Activated CD4-positive, alpha-beta memory T cell treated with anti-CD3 and anti-CD28 coated beads for 36 hours (primary cell): ENCODE measurements at regions of chr2 and their contacts with region 1.

Region 1: GRCh38 chr2:160109936-160110673 is 47.7 kb upstream of the PLA2R1 start:
- DNase-seq: peak; percentile 65
- H3K4me3 Mint-ChIP-seq: no peak overlapping the region
- H3K27ac Mint-ChIP-seq: no peak overlapping the region
- H3K4me1 Mint-ChIP-seq: no peaks in the 10 kb centered on the region
- H3K27me3 Mint-ChIP-seq: peaks cover 21% of the 10 kb centered on the region

Region 2: GRCh38 chr2:160087854-160088745 is 22.0 kb before region 1 on chr2:
- CTCF ChIA-PET with region 1: interaction called, 10 read pairs
- POLR2A ChIA-PET with region 1: no interaction called
- intact Hi-C with region 1: no loop called
- DNase-seq: no peak
- H3K4me3 Mint-ChIP-seq: no peak overlapping the region
- H3K27ac Mint-ChIP-seq: no peak overlapping the region
- H3K4me1 Mint-ChIP-seq: no peaks in the 10 kb centered on the region
- H3K27me3 Mint-ChIP-seq: peaks cover 1% of the 10 kb centered on the region

Region 3: GRCh38 chr2:160096409-160096808 is 13.7 kb before region 1 on chr2:
- CTCF ChIA-PET with region 1: interaction called, 12 read pairs
- POLR2A ChIA-PET with region 1: no interaction called
- intact Hi-C with region 1: no loop called
- DNase-seq: peak; percentile 26
- H3K4me3 Mint-ChIP-seq: no peak overlapping the region
- H3K27ac Mint-ChIP-seq: no peak overlapping the region
- H3K4me1 Mint-ChIP-seq: peaks cover 5% of the 10 kb centered on the region
- H3K27me3 Mint-ChIP-seq: peaks cover 9% of the 10 kb centered on the region

Region 4: DNA sequence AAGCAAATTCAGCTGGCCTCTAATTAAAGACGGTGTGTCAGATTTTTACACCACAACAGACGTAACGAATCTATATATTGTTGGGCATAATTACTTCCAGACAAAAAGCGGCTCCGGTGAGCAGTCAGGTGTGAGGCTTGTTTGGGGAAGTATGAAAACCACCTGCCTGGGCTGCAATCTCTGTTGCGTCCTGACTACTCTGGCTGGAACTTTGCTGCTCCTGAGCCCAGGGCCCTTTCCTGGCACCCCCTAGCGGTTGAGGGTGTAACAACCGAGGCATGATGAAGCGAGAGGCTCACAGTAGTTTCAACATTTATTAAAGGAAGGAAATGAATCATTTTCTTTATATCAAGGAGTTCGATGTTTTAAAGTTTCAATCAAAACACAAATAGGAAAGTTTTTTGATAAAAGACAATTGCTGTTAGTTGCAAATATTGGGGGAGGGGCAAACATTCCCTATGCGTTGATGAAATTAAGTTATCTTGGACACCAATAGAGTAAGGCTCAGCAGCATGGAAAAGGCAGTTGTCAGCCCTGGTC is 100.6 kb after region 1 on chr2:
- CTCF ChIA-PET with region 1: interaction called, 24 read pairs
- POLR2A ChIA-PET with region 1: interaction called, 5 read pairs
- intact Hi-C with region 1: loop called (anchors 1 kb)
- DNase-seq: peak; percentile 82
- H3K4me3 Mint-ChIP-seq: no peak overlapping the region
- H3K27ac Mint-ChIP-seq: no peak overlapping the region
- H3K4me1 Mint-ChIP-seq: peaks cover 32% of the 10 kb centered on the region
- H3K27me3 Mint-ChIP-seq: peaks cover 5% of the 10 kb centered on the region

Region 5: GRCh38 chr2:160252278-160252887 is 142.3 kb after region 1 on chr2:
- CTCF ChIA-PET with region 1: interaction called, 20 read pairs
- POLR2A ChIA-PET with region 1: no interaction called
- intact Hi-C with region 1: no loop called
- DNase-seq: no peak
- H3K4me3 Mint-ChIP-seq: no peak overlapping the region
- H3K27ac Mint-ChIP-seq: no peak overlapping the region
- H3K4me1 Mint-ChIP-seq: no peaks in the 10 kb centered on the region
- H3K27me3 Mint-ChIP-seq: peaks cover 1% of the 10 kb centered on the region

Region 6: GRCh38 chr2:160332318-160332717 is 222.2 kb after region 1 on chr2:
- CTCF ChIA-PET with region 1: no interaction called
- POLR2A ChIA-PET with region 1: no interaction called
- intact Hi-C with region 1: no loop called
- DNase-seq: peak; percentile 33
- H3K4me3 Mint-ChIP-seq: no peak overlapping the region
- H3K27ac Mint-ChIP-seq: peak overlapping the region; percentile 72
- H3K4me1 Mint-ChIP-seq: peaks cover 83% of the 10 kb centered on the region
- H3K27me3 Mint-ChIP-seq: no peaks in the 10 kb centered on the region

Region 7: GRCh38 chr2:160970052-160970965 is 860.2 kb after region 1 on chr2:
- CTCF ChIA-PET with region 1: interaction called, 15 read pairs
- POLR2A ChIA-PET with region 1: no interaction called
- intact Hi-C with region 1: no loop called
- DNase-seq: no peak
- H3K4me3 Mint-ChIP-seq: no peak overlapping the region
- H3K27ac Mint-ChIP-seq: no peak overlapping the region
- H3K4me1 Mint-ChIP-seq: peaks cover 2% of the 10 kb centered on the region
- H3K27me3 Mint-ChIP-seq: no peaks in the 10 kb centered on the region

Region 8: GRCh38 chr2:161273038-161273760 is 1163.1 kb after region 1 on chr2:
- CTCF ChIA-PET with region 1: interaction called, 6 read pairs
- POLR2A ChIA-PET with region 1: no interaction called
- intact Hi-C with region 1: loop called (anchors 5 kb)
- DNase-seq: no peak
- H3K4me3 Mint-ChIP-seq: no peak overlapping the region
- H3K27ac Mint-ChIP-seq: no peak overlapping the region
- H3K4me1 Mint-ChIP-seq: no peaks in the 10 kb centered on the region
- H3K27me3 Mint-ChIP-seq: no peaks in the 10 kb centered on the region